T-cell (primary cell): ENCODE measurements at regions of chr17 and their contacts with region 1.

Region 1: DNA sequence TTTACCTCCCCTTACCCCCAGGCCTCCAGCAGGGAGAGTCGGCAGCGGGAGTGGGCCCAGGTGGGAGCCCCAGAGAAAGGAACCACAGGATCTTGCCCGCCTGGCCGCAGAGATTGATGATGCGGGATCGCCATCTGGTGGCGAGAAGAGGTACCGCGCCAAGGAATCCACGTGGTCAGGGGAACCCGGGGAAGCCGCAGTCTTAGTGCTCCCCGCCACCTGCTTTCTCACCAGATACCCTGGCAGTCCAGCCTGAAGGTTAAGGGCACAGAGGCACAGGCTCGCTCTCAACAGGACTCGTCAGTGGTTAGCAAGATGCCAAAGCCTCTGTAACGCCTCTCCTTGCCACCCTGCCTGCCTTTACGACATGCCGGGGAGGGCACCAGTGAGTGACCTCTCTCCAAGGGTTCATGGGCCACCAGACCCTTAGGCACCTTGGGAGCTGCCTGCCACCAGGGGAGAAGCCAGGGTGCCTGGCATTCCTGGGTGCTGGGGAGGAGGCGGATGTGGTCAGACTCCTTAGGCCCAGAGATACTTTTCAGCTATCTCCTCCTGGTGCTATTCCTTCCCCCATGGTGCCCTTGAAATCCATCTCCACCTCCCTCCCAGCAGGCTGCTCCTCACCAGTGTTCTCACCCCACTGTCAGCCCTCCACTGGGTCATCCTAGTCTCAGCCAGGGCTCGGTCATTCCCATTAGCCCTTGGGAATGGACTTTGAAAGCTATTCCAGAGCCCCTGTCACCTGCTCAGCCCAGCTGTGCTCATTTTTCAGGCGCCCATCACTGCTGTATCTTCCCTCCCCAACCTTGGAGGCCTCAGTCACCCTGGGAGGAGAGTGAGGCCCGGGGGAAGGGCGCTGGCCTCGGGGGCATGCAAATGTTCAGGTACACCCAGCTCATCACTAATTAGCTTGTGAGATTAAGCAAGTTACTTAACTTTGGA is 5.5 kb upstream of the RHBDF2 start:
- DNase-seq: peak; percentile 67 to 94 (median 84)
- ATAC-seq: peak; percentile 79 to 84 (median 82)
- H3K4me3 ChIP-seq: no peak overlapping the region
- H3K4me3 Mint-ChIP-seq: no peak overlapping the region
- H3K27ac ChIP-seq: no peak overlapping the region
- H3K27ac Mint-ChIP-seq: no peak overlapping the region
- H3K4me1 ChIP-seq: peaks cover 0 to 28% of the 10 kb centered on the region in 2 experiments
- H3K4me1 Mint-ChIP-seq: peaks cover 16 to 35% (median 32%) of the 10 kb centered on the region in 3 donors
- H3K27me3 ChIP-seq: peaks cover 0 to 14% of the 10 kb centered on the region in 2 experiments
- H3K27me3 Mint-ChIP-seq: no peaks in the 10 kb centered on the region

Region 2: GRCh38 chr17:76452660-76453430 is 53.8 kb before region 1 on chr17 and contains the start of gene UBE2O:
- CTCF ChIA-PET with region 1: interaction called in 1 of 2 experiments, 11 read pairs
- POLR2A ChIA-PET with region 1: interaction called, 7 to 8 read pairs
- DNase-seq: peak; percentile 82 to 97 (median 91)
- ATAC-seq: peak; percentile 91 to 93 (median 92)
- H3K4me3 ChIP-seq: peak within 1 kb of the TSS; percentile 62 to 67
- H3K4me3 Mint-ChIP-seq: peak within 1 kb of the TSS; percentile 81 to 87 (median 85)
- H3K27ac ChIP-seq: peak within 1 kb of the TSS; percentile 63
- H3K27ac Mint-ChIP-seq: peak within 1 kb of the TSS; percentile 87 to 89
- H3K4me1 ChIP-seq: peaks cover 10 to 23% of the 10 kb centered on the region in 2 experiments
- H3K4me1 Mint-ChIP-seq: peaks cover 42 to 49% (median 43%) of the 10 kb centered on the region in 3 donors
- H3K27me3 ChIP-seq: no peaks in the 10 kb centered on the region
- H3K27me3 Mint-ChIP-seq: no peaks in the 10 kb centered on the region
- total RNA-seq, gene UBE2O: 33.9 to 57.8 (median 47.5) TPM

Region 3: GRCh38 chr17:76467366-76467765 is 39.3 kb before region 1 on chr17 and contains the start of gene AANAT:
- CTCF ChIA-PET with region 1: interaction called, 4 to 6 read pairs
- POLR2A ChIA-PET with region 1: interaction called in 1 of 2 experiments, 10 read pairs
- DNase-seq: no peak
- ATAC-seq: no peak
- H3K4me3 ChIP-seq: no peak within 1 kb of the TSS
- H3K4me3 Mint-ChIP-seq: no peak within 1 kb of the TSS
- H3K27ac ChIP-seq: no peak within 1 kb of the TSS
- H3K27ac Mint-ChIP-seq: no peak within 1 kb of the TSS
- H3K4me1 ChIP-seq: peaks cover 0 to 6% of the 10 kb centered on the region in 2 experiments
- H3K4me1 Mint-ChIP-seq: peaks cover 3 to 5% (median 4%) of the 10 kb centered on the region in 3 donors
- H3K27me3 ChIP-seq: peaks cover 0 to 2% of the 10 kb centered on the region in 2 experiments
- H3K27me3 Mint-ChIP-seq: no peaks in the 10 kb centered on the region
- total RNA-seq, gene AANAT: not detected

Region 4: DNA sequence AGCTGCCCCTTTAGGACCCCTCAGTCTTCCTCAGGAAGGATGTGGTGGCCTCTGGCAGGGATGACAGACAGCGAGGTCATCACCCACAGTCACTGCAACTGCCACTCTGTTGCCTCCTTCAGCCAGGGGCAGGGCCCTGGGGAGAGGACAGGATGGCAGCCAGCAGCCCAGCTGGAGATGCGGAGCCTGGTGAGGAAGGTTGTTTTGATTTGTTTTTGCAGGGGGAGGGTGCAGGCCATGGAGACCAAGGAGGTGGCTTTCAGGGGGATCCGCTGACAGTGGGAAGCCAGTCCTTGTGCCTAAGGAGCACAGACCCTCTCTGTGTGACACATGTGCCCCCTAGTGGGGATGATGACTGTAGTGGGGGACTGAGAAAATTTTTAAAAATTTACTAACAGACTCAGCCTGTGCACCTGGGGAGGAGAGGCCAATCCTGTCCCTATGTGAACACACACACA is 40.5 kb after region 1 on chr17:
- CTCF ChIA-PET with region 1: interaction called in 1 of 2 experiments, 10 read pairs
- POLR2A ChIA-PET with region 1: no interaction called
- DNase-seq: peak in 34 of 35 experiments; percentile 11 to 79 (median 54)
- ATAC-seq: peak; percentile 80 to 94 (median 87)
- H3K4me3 ChIP-seq: no peak overlapping the region
- H3K4me3 Mint-ChIP-seq: no peak overlapping the region
- H3K27ac ChIP-seq: no peak overlapping the region
- H3K27ac Mint-ChIP-seq: no peak overlapping the region
- H3K4me1 ChIP-seq: peaks cover 0 to 7% of the 10 kb centered on the region in 2 experiments
- H3K4me1 Mint-ChIP-seq: peaks cover 0 to 4% (median 0%) of the 10 kb centered on the region in 3 donors
- H3K27me3 ChIP-seq: peaks cover 0 to 37% of the 10 kb centered on the region in 2 experiments
- H3K27me3 Mint-ChIP-seq: peaks cover 6 to 17% of the 10 kb centered on the region in 2 donors